Panc1 (cell line): ENCODE measurements at regions of chr11 and their contacts with region 1.

Region 1: DNA sequence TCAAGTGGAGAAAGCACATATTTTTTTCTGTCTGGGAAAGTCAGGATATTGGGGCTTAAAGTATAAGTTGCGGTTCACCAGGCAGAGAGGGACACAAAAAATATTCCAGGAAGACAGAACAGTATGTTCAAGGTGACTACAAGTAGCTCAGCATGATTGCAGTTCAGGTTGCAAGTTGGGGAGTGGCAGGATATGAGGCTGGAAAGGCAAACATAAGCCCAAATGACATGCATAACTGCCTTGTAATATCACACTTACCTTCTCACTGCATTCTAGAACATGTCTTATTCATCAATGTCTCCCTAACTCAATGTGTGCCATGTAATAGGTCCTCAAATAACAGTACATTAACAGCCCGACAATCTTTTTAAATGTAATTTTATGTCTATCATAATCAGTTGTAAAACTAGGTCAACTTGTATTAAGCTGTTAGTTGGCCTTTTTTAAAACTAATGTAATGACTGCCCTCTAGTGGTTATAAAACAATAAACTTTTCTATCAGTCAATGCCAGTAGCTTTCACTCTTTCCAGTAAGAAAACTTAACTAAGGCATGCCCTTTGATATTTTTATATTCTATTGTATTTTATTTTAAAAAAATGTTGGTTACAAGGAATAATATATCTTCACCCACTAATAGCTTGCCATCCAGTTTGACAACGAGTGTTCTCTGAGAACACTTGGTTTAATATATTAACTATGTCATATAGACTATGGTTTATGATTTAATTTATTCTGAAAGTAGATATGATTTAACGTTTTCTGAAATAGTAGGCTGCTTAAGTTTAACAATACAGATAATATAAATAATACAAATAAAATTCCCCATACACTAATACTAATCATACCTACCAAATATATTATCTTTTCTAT is 39.4 kb upstream of the CFAP300 start:
- DNase-seq: peak; percentile 88
- ATAC-seq: peak; percentile 80
- H3K4me3 ChIP-seq: no peak overlapping the region
- H3K27ac ChIP-seq: peak overlapping the region; percentile 69
- H3K4me1 ChIP-seq: peaks cover 32% of the 10 kb centered on the region
- H3K27me3 ChIP-seq: no peaks in the 10 kb centered on the region
- CTCF ChIP-seq: peak; percentile 50; the same call in 1 of the 2 replicates

Region 2: GRCh38 chr11:101456812-101457211 is 551.0 kb before region 1 on chr11:
- CTCF ChIA-PET with region 1: interaction called, 3 read pairs
- POLR2A ChIA-PET with region 1: no interaction called
- in situ Hi-C with region 1: no loop called
- intact Hi-C with region 1: loop called (anchors 5 kb)
- DNase-seq: no peak
- ATAC-seq: 0 out of 2 replicates have a peak, but pooled peaks have one; percentile 63
- H3K4me3 ChIP-seq: no peak overlapping the region
- H3K27ac ChIP-seq: no peak overlapping the region
- H3K4me1 ChIP-seq: no peaks in the 10 kb centered on the region
- H3K27me3 ChIP-seq: no peaks in the 10 kb centered on the region
- CTCF ChIP-seq: peak; percentile 43; the same call in 1 of the 2 replicates

Region 3: GRCh38 chr11:101860696-101861427 is 146.9 kb before region 1 on chr11:
- CTCF ChIA-PET with region 1: interaction called, 54 read pairs
- POLR2A ChIA-PET with region 1: interaction called, 5 read pairs
- in situ Hi-C with region 1: no loop called
- intact Hi-C with region 1: loop called (anchors 1 kb)
- DNase-seq: peak; percentile 45
- ATAC-seq: peak; percentile 92
- H3K4me3 ChIP-seq: no peak overlapping the region
- H3K27ac ChIP-seq: peak overlapping the region; percentile 40; the same call in 1 of the 2 replicates
- H3K4me1 ChIP-seq: peaks cover 13% of the 10 kb centered on the region; the same call in 1 of the 2 replicates
- H3K27me3 ChIP-seq: no peaks in the 10 kb centered on the region
- CTCF ChIP-seq: peak; percentile 92

Region 4: DNA sequence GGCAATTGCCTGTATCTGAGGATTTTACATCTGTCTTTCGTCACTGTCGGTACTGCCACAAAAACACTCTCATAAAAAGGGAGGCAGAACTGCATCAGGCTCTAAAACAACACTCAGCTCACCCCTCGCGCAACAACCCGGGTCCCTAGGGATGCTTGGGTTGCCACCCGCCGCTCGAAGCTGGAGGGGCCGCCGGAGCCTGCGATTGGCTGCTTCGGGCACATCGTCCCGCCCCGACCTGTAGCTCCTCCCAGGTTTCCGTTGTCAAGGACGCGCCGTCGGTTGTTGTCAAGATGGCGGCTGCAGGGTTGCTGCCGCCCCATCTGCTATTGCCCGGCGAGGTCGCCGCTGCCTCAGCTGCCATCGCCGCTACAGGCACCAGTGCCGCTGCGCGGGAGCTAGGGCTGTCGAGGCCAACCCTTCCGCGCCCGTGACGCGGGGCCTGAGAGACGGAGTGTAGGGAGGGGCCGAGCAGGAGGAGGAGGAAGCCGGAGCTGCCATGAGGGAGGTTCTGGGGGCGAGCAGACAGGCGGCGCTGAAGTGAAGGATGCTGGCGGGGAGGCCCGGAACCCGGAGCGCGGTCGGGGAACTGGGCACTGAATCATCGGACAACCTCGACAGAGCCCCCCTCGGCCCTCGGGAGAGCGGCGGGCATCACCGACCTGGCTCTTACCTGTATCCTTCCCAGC is 92.9 kb before region 1 on chr11 and contains the start of gene CEP126:
- CTCF ChIA-PET with region 1: interaction called, 4 read pairs
- POLR2A ChIA-PET with region 1: no interaction called
- in situ Hi-C with region 1: no loop called
- intact Hi-C with region 1: loop called (anchors 10 kb)
- DNase-seq: peak; percentile 81
- ATAC-seq: peak; percentile 97
- H3K4me3 ChIP-seq: peak within 1 kb of the TSS; percentile 79 to 82
- H3K27ac ChIP-seq: peak within 1 kb of the TSS; percentile 94
- H3K4me1 ChIP-seq: peaks cover 37% of the 10 kb centered on the region
- H3K27me3 ChIP-seq: no peaks in the 10 kb centered on the region
- CTCF ChIP-seq: peak; percentile 78
- total RNA-seq, gene CEP126: 6.6 TPM